Activated B cell treated with CpG ODN at 0.5 μM for 24 hours (primary cell): ENCODE measurements at regions of chr20 and their contacts with region 1.

Region 1: GRCh38 chr20:51306503-51307358 is 235.8 kb downstream of the NFATC2 start:
- DNase-seq: peak; percentile 65
- ATAC-seq: peak; percentile 98
- H3K4me3 Mint-ChIP-seq: no peak overlapping the region
- H3K27ac Mint-ChIP-seq: no peak overlapping the region
- H3K4me1 Mint-ChIP-seq: no peaks in the 10 kb centered on the region
- H3K27me3 Mint-ChIP-seq: peaks cover 25% of the 10 kb centered on the region
- CTCF ChIP-seq: no peak

Region 2: DNA sequence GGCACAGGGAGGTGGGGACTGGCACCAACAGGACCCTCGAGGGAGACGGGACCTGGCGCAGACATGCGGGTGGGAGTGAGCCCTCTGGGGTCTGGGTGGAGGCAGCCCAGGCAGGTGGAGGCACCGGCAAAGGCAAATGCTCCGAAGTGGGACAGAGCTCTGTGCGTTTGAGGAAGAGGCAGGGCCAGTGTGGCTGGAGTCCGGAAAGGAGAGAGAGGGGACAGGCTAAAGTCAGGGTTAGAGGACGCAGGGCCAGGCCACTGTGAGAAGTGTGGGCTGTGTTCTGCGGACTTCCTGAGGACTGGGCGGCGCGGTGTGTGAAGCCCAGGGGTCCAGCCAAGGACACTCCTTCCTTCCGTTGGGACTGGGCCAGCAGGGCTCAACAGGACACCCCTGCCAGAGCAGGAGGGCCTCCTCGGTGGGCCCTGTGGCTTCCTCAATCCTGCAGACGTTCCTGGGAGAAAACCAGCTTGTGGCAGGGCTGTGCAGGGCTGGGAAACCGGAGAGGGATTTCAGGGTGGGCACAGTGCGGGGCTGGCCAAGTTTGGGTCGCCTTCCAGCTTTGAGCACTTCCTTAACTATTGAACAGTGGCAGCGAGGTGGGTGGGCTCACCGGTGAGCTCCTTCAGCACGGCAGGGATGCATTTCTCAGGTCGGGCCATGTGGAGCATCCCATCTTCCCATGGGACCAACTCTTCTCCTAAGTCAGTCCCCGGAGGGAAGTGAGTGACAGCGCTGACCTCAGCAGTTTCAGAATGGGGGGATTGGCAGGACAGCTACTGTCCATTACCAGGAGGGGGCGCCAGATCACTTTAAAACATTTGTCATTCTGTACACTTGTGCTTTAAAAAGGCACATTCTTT is 325.6 kb before region 1 on chr20:
- CTCF ChIA-PET with region 1: interaction called, 109 read pairs
- POLR2A ChIA-PET with region 1: no interaction called
- intact Hi-C with region 1: no loop called
- DNase-seq: peak; percentile 37
- ATAC-seq: peak; percentile 84
- H3K4me3 Mint-ChIP-seq: no peak overlapping the region
- H3K27ac Mint-ChIP-seq: no peak overlapping the region
- H3K4me1 Mint-ChIP-seq: peaks cover 3% of the 10 kb centered on the region
- H3K27me3 Mint-ChIP-seq: peaks cover 31% of the 10 kb centered on the region
- CTCF ChIP-seq: peak; percentile 89

Region 3: DNA sequence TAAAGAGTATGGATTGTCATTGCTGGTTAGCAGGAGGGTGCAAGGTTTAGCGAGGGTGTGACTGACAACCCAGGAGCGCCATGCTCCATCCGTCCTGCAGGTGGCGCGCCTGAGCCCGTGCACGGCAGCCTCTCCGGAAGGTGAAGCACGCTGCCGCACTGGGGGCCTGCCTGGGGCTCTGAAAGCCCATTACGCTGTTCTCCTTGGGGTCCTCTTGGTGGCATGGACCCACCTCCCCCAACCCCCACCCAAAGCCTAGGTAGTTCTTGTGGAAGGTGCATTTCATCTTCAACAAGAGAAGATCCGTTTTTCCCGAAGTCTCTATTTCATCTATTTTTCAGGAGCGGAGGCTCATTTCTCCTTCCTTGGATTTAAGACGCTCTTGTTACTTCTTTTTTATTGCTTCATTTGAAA is 86.4 kb before region 1 on chr20:
- CTCF ChIA-PET with region 1: no interaction called
- POLR2A ChIA-PET with region 1: no interaction called
- intact Hi-C with region 1: loop called (anchors 1 kb)
- DNase-seq: peak; percentile 22
- ATAC-seq: no peak
- H3K4me3 Mint-ChIP-seq: no peak overlapping the region
- H3K27ac Mint-ChIP-seq: no peak overlapping the region
- H3K4me1 Mint-ChIP-seq: peaks cover 18% of the 10 kb centered on the region
- H3K27me3 Mint-ChIP-seq: peaks cover 23% of the 10 kb centered on the region
- CTCF ChIP-seq: no peak